ENCODE measurements at regions of chr3 and their contacts with region 1.

Region 1: GRCh38 chr3:42229942-42230688 is 35.9 kb downstream of the CCK start:
- DNase-seq: no peak
- ATAC-seq: no peak
- H3K4me3 Mint-ChIP-seq: no peak overlapping the region
- H3K27ac Mint-ChIP-seq: no peak overlapping the region
- H3K4me1 Mint-ChIP-seq: peaks cover 2% of the 10 kb centered on the region
- H3K27me3 Mint-ChIP-seq: peaks cover 12% of the 10 kb centered on the region

Region 2: GRCh38 chr3:42443819-42444436 is 213.8 kb after region 1 on chr3:
- CTCF ChIA-PET with region 1: interaction called, 8 read pairs
- POLR2A ChIA-PET with region 1: no interaction called
- intact Hi-C with region 1: loop called (anchors 1 to 5 kb)
- DNase-seq: peak; percentile 89
- ATAC-seq: peak; percentile 96
- H3K4me3 Mint-ChIP-seq: no peak overlapping the region
- H3K27ac Mint-ChIP-seq: no peak overlapping the region
- H3K4me1 Mint-ChIP-seq: no peaks in the 10 kb centered on the region
- H3K27me3 Mint-ChIP-seq: peaks cover 2% of the 10 kb centered on the region

Region 3: DNA sequence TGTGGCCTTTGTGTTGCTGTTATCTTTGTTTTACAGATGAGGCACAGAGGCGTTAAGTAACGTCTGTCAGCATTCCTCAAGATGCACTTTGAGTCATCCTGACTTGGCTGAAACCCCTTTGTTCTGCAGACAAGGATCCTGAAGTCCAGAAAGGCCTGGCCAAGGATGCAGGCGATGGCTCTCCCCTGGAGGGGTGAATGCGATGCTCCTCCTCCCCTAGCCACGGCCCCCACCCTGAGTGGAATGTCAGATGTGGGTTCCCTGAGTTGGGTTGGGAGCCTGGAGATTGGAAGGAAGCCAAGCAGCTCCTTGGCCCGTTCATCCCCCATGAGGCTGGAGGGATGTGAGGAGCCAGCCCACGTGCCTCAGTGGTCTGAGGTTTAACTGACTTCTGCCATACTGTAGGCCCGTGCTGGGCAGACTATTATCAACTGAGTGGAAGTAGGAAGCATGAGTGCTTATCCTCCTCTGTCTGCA is 832.5 kb after region 1 on chr3:
- CTCF ChIA-PET with region 1: no interaction called
- POLR2A ChIA-PET with region 1: no interaction called
- intact Hi-C with region 1: no loop called
- DNase-seq: no peak
- ATAC-seq: no peak
- H3K4me3 Mint-ChIP-seq: no peak overlapping the region
- H3K27ac Mint-ChIP-seq: no peak overlapping the region
- H3K4me1 Mint-ChIP-seq: peaks cover 16% of the 10 kb centered on the region
- H3K27me3 Mint-ChIP-seq: no peaks in the 10 kb centered on the region

Measured in activated CD4-positive, alpha-beta T cell treated with anti-CD3 and anti-CD28 coated beads for 36 hours (primary cell).